ENCODE measurements at regions of chr10 and their contacts with region 1.

Region 1: GRCh38 chr10:101441541-101442455 is 87.8 kb downstream of the BTRC start:
- DNase-seq: peak; percentile 31
- ATAC-seq: peak; percentile 81
- H3K4me3 Mint-ChIP-seq: no peak overlapping the region
- H3K27ac Mint-ChIP-seq: no peak overlapping the region
- H3K4me1 Mint-ChIP-seq: peaks cover 3% of the 10 kb centered on the region
- H3K27me3 Mint-ChIP-seq: peaks cover 3% of the 10 kb centered on the region

Region 2: DNA sequence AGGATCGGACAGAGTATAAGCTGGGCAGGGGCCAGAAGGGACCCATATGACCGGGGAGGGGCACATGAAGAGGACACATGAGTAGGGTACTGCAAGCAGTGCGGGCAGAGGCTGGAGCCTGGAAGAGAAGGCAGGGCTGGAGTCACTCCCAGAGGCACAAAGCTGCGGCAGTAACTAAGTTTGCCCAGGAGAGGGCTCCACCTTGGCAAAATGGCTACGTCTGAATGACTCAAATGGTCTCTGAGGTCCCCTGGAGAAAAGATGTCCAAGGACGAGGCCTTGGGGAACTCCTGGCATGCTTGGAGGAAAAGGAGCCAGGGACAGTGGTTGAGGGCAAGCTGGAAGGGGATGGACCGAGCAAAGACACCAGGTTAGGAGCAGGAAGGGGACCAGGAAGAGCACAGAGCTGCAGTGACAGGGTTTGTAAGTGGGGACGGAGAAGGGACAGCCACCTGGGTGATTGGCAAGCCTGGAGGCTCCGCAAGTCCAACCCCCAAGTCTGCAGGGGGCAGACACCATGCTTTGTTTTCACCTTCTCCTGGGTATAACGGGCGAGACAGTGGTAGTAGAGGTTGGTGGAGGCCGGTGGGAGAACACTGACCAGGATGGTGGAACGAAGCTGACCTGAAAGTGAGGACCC is 169.4 kb before region 1 on chr10:
- CTCF ChIA-PET with region 1: interaction called, 10 read pairs
- POLR2A ChIA-PET with region 1: no interaction called
- DNase-seq: peak; percentile 67
- ATAC-seq: peak; percentile 90
- H3K4me3 Mint-ChIP-seq: no peak overlapping the region
- H3K27ac Mint-ChIP-seq: no peak overlapping the region
- H3K4me1 Mint-ChIP-seq: no peaks in the 10 kb centered on the region
- H3K27me3 Mint-ChIP-seq: peaks cover 17% of the 10 kb centered on the region

Region 3: GRCh38 chr10:101301249-101301711 is 140.5 kb before region 1 on chr10:
- CTCF ChIA-PET with region 1: interaction called, 16 read pairs
- POLR2A ChIA-PET with region 1: no interaction called
- DNase-seq: peak; percentile 51
- ATAC-seq: peak; percentile 54
- H3K4me3 Mint-ChIP-seq: no peak overlapping the region
- H3K27ac Mint-ChIP-seq: no peak overlapping the region
- H3K4me1 Mint-ChIP-seq: no peaks in the 10 kb centered on the region
- H3K27me3 Mint-ChIP-seq: peaks cover 20% of the 10 kb centered on the region

Region 4: DNA sequence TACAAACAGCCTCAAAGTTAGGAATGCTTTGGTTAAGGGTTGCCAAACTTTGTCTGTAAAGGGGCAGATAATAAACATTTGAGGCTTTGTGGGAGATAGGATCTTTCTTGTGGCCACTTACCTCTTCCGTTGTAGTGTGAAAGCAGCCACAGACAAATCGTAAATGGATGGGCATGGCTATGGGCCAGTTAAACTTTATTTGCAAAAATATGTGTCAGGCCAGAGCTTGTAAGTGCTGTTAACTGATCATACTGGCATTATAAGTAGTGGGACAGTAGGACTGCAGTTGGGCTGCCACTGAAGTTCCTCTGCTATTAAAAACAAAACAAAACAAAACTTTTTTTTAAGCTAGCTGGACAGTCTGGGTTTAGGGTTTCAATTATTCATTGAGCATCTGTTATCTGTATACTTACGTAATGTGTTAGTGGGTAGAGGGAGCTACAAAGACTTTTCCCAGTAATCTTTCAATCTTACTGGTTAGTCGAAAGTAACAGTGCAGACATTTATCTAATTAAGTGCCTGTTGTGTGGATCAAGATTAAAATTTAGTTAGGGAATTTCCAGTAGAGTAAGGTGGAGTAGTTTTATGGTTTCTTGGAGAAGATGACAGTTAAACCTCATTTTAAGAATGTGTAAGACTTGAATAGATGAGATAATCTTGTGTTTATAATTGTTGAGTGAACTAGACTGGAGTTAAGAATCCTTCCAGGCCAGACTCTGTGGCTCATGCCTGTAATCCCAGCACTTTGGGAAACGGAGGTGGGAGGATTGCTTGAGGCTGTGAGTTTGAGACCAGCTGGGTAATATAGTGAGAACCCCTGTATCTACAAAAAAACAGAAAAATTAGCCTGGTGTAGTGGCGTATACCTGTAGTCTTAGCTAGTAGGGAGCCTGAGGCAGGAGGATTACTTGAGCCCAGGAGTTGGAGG is 12.3 kb after region 1 on chr10:
- CTCF ChIA-PET with region 1: interaction called, 17 read pairs
- POLR2A ChIA-PET with region 1: no interaction called
- DNase-seq: peak; percentile 26
- ATAC-seq: peak; percentile 61
- H3K4me3 Mint-ChIP-seq: no peak overlapping the region
- H3K27ac Mint-ChIP-seq: no peak overlapping the region
- H3K4me1 Mint-ChIP-seq: peaks cover 15% of the 10 kb centered on the region
- H3K27me3 Mint-ChIP-seq: peaks cover 39% of the 10 kb centered on the region

Region 5: DNA sequence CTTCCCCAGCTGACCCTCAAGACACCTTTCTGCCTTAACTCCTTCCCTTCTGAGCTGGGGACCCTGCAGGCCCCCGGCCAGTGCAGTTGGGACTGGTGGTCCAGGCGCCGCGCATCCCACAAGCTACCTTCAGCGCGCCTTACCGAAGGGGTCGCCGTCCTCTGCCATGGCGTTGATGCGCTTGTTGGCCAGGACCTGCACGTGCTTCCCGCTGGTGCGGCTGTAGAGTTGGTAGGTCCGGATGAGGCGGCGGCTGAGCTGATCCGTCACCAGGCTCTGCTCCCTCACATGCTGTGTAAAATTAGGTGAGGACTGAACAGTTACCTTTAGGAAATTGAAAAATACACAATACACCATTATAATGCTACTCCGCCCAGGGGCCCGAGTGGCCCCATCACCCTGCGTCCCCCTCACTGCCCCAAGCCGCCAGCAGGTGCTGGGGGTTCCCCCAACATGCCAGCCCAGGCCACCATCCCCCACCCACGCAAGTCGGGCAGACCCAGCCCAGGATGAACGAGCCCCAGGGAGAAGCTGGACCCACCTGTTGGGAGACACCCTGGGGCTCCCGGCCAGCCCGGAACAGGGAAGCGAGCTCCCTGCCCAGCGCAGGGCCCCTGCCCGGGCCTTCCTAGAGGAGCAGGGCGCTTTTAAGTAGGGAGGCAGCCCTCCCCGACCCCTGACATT is 332.9 kb after region 1 on chr10:
- CTCF ChIA-PET with region 1: no interaction called
- POLR2A ChIA-PET with region 1: no interaction called
- DNase-seq: no peak
- ATAC-seq: no peak
- H3K4me3 Mint-ChIP-seq: no peak overlapping the region
- H3K27ac Mint-ChIP-seq: no peak overlapping the region
- H3K4me1 Mint-ChIP-seq: peaks cover 17% of the 10 kb centered on the region
- H3K27me3 Mint-ChIP-seq: peaks cover 62% of the 10 kb centered on the region

Measured in activated CD8-positive, alpha-beta T cell treated with anti-CD3 and anti-CD28 coated beads, Interleukin-2, amount 10 ng/mL, durations not matched to agents 7 days and 5 days (primary cell).